ENCODE measurements at regions of chr5 and their contacts with region 1.

Region 1: DNA sequence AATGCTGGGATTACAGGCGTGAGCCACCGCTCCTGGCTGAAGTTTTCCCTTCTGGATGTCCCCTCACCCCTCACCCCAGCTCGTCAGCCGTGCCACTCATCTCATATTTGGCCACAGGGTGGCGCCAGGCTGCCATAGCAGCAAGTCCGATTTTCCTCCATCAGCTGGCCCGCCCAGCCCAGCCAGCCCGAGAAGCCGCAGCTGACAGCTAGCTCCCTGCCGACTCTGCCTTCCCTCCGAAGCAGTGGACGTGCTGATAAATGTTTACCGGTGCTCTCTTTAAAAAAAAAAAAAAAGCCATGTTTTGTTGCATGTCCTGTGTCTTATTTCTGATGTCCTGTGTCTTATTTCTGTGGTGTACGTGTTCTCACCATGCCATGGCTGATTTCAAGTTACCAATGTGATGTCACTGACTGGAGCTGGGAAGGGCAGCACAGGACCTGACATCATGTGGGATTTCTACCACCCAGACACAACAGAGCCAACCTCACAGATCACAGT is 58.3 kb downstream of the PFDN1 start:
- DNase-seq: peak; percentile 69 to 88 (median 75)
- ATAC-seq: peak; percentile 78
- H3K4me3 ChIP-seq: no peak overlapping the region
- H3K4me3 Mint-ChIP-seq: peak overlapping the region; percentile 48
- H3K27ac ChIP-seq: no peak overlapping the region
- H3K27ac Mint-ChIP-seq: peak overlapping the region; percentile 43
- H3K4me1 ChIP-seq: peaks cover 18% of the 10 kb centered on the region
- H3K4me1 Mint-ChIP-seq: peaks cover 31% of the 10 kb centered on the region
- H3K27me3 ChIP-seq: no peaks in the 10 kb centered on the region
- H3K27me3 Mint-ChIP-seq: no peaks in the 10 kb centered on the region
- CTCF ChIP-seq: peak; percentile 76

Region 2: GRCh38 chr5:140073296-140073695 is 171.3 kb before region 1 on chr5:
- CTCF ChIA-PET with region 1: no interaction called
- POLR2A ChIA-PET with region 1: no interaction called
- intact Hi-C with region 1: no loop called
- DNase-seq: peak in 3 of 14 experiments; percentile 49 to 67 (median 64)
- ATAC-seq: no peak
- H3K4me3 ChIP-seq: no peak overlapping the region
- H3K4me3 Mint-ChIP-seq: no peak overlapping the region
- H3K27ac ChIP-seq: no peak overlapping the region
- H3K27ac Mint-ChIP-seq: no peak overlapping the region
- H3K4me1 ChIP-seq: no peaks in the 10 kb centered on the region
- H3K4me1 Mint-ChIP-seq: no peaks in the 10 kb centered on the region
- H3K27me3 ChIP-seq: peaks cover 7 to 10% of the 10 kb centered on the region in 2 experiments
- H3K27me3 Mint-ChIP-seq: peaks cover 36% of the 10 kb centered on the region
- CTCF ChIP-seq: peak; percentile 83

Region 3: GRCh38 chr5:140261403-140262171 is 17.0 kb after region 1 on chr5:
- CTCF ChIA-PET with region 1: interaction called, 17 read pairs
- POLR2A ChIA-PET with region 1: interaction called, 3 read pairs
- intact Hi-C with region 1: no loop called
- DNase-seq: peak in 7 of 14 experiments; percentile 9 to 73 (median 29)
- ATAC-seq: peak; percentile 65
- H3K4me3 ChIP-seq: no peak overlapping the region
- H3K4me3 Mint-ChIP-seq: peak overlapping the region; percentile 9
- H3K27ac ChIP-seq: peak overlapping the region in 1 of 2 donors; percentile 9
- H3K27ac Mint-ChIP-seq: peak overlapping the region; percentile 63
- H3K4me1 ChIP-seq: peaks cover 32% of the 10 kb centered on the region
- H3K4me1 Mint-ChIP-seq: peaks cover 51% of the 10 kb centered on the region
- H3K27me3 ChIP-seq: no peaks in the 10 kb centered on the region
- H3K27me3 Mint-ChIP-seq: no peaks in the 10 kb centered on the region
- CTCF ChIP-seq: no peak

Region 4: DNA sequence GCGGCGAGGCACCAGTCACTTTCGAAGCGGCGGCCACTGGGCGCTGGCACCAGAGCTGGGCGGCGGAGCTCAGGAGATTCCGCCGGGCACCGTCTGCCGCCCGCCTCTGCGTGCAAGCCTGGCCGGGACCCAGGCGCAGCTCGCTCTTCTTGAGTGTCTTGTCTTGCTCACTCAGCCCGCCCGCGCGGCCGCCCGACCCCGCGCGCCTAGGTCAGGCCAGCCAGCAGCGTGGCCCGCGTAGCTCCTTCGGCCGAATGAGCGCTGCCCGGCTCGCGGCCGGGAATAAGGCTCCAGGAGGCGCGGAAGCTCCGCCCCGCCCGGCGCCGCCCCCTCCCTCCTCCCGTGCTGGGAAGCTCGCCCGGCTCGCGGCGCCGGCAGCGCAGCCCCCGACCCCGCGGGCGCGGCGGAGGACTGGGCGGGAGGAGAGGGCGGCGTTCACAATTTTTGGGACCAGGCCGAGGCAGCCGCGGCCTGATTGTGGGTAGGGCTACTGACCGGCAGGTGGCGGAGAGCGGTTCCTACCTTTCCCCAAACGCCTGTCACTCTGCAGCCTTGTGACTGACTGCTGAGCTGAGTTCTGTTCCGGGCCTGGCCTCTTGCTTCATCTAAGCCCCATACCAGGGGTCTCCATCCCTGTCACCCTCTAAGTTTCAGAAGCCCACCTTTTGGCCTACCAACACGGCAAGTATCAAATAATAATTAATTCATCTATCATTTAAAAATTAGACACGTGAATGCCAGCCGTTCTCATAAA is 102.0 kb after region 1 on chr5 and contains the start of gene HBEGF:
- CTCF ChIA-PET with region 1: interaction called, 118 read pairs
- POLR2A ChIA-PET with region 1: interaction called, 17 read pairs
- intact Hi-C with region 1: loop called (anchors 1 kb)
- DNase-seq: peak in 13 of 14 experiments; percentile 11 to 72 (median 46)
- ATAC-seq: peak; percentile 67
- H3K4me3 ChIP-seq: peak within 1 kb of the TSS; percentile 56
- H3K4me3 Mint-ChIP-seq: peak within 1 kb of the TSS; percentile 83
- H3K27ac ChIP-seq: no peak within 1 kb of the TSS
- H3K27ac Mint-ChIP-seq: peak within 1 kb of the TSS; percentile 1
- H3K4me1 ChIP-seq: peaks cover 49% of the 10 kb centered on the region
- H3K4me1 Mint-ChIP-seq: peaks cover 50% of the 10 kb centered on the region
- H3K27me3 ChIP-seq: peaks cover 0 to 4% of the 10 kb centered on the region in 2 experiments
- H3K27me3 Mint-ChIP-seq: peaks cover 4% of the 10 kb centered on the region
- CTCF ChIP-seq: peak; percentile 30
- total RNA-seq, gene HBEGF: 3.6 to 4.2 TPM

Region 5: DNA sequence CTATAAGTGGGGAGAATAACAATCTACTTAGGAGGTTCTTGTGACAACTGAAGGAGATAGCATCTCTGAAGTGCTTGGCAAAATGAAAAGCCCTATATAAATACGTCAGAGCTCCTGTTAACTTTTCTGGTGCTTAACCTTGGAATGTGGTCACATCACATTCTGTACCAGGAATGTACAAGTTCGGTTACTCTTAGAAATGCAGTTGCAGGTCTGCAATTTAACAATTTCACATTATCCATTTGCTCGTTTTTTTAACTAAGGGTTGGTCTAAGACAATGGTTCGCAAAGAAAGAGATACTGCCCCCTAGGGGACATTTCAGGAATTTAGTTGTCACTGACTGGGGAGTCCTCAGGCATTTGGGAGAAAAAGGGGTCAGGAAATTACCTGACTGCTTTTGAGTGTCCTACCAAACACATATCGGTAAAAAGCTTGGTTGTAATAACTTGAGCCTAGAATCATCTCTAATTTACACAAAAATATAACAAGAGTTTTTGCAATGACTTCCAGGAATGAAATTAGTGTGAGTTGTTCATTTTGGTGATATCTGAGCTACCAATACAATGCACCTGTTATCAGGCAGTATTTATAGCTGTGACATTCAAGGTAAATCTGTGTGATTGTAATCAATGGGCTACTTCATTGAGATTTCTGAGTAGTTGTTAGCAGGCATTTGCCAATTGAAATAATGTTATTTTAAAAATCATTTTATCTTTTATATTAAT is 107.2 kb after region 1 on chr5:
- CTCF ChIA-PET with region 1: interaction called, 118 read pairs
- POLR2A ChIA-PET with region 1: interaction called, 17 read pairs
- intact Hi-C with region 1: loop called (anchors 1 kb)
- DNase-seq: peak in 9 of 14 experiments; percentile 20 to 87 (median 63)
- ATAC-seq: peak; percentile 92
- H3K4me3 ChIP-seq: no peak overlapping the region
- H3K4me3 Mint-ChIP-seq: peak overlapping the region; percentile 0
- H3K27ac ChIP-seq: no peak overlapping the region
- H3K27ac Mint-ChIP-seq: no peak overlapping the region
- H3K4me1 ChIP-seq: peaks cover 8% of the 10 kb centered on the region
- H3K4me1 Mint-ChIP-seq: peaks cover 14% of the 10 kb centered on the region
- H3K27me3 ChIP-seq: peaks cover 0 to 4% of the 10 kb centered on the region in 2 experiments
- H3K27me3 Mint-ChIP-seq: peaks cover 4% of the 10 kb centered on the region
- CTCF ChIP-seq: peak; percentile 95

Region 6: GRCh38 chr5:140357726-140358093 is 113.1 kb after region 1 on chr5:
- CTCF ChIA-PET with region 1: interaction called, 118 read pairs
- POLR2A ChIA-PET with region 1: interaction called, 11 read pairs
- intact Hi-C with region 1: loop called (anchors 1 kb)
- DNase-seq: peak; percentile 56 to 87 (median 65)
- ATAC-seq: peak; percentile 98
- H3K4me3 ChIP-seq: peak overlapping the region; percentile 40
- H3K4me3 Mint-ChIP-seq: no peak overlapping the region
- H3K27ac ChIP-seq: no peak overlapping the region
- H3K27ac Mint-ChIP-seq: no peak overlapping the region
- H3K4me1 ChIP-seq: peaks cover 15% of the 10 kb centered on the region
- H3K4me1 Mint-ChIP-seq: peaks cover 10% of the 10 kb centered on the region
- H3K27me3 ChIP-seq: no peaks in the 10 kb centered on the region
- H3K27me3 Mint-ChIP-seq: peaks cover 4% of the 10 kb centered on the region
- CTCF ChIP-seq: peak; percentile 77

Region 7: DNA sequence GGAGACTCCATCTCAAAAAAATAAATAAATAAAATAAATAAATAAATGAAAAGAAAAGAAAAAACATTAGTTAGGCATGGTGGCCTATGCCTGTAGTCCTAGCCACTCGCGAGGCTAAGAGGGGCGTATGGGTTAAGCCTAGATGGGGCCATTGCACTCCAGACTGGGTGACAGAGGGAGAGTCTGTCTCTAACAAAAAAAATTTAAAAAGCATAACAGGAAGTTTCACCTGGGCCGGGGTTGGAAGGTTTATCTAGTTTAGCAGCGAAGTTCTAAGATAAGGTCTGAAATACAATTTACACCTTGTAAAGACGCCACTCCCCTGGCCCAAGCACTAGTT is 473.6 kb after region 1 on chr5:
- CTCF ChIA-PET with region 1: interaction called, 3 read pairs
- POLR2A ChIA-PET with region 1: no interaction called
- intact Hi-C with region 1: loop called (anchors 1 to 5 kb)
- DNase-seq: no peak
- ATAC-seq: no peak
- H3K4me3 ChIP-seq: no peak overlapping the region
- H3K4me3 Mint-ChIP-seq: no peak overlapping the region
- H3K27ac ChIP-seq: no peak overlapping the region
- H3K27ac Mint-ChIP-seq: no peak overlapping the region
- H3K4me1 ChIP-seq: no peaks in the 10 kb centered on the region
- H3K4me1 Mint-ChIP-seq: peaks cover 1% of the 10 kb centered on the region
- H3K27me3 ChIP-seq: peaks cover 0 to 6% of the 10 kb centered on the region in 2 experiments
- H3K27me3 Mint-ChIP-seq: peaks cover 13% of the 10 kb centered on the region
- CTCF ChIP-seq: no peak